Caco-2 (cell line): ENCODE measurements at regions of chr10 and their contacts with region 1.

Region 1: GRCh38 chr10:77111611-77112550 is 525.7 kb downstream of the KCNMA1 start:
- DNase-seq: peak in 1 of 2 experiments; percentile 66
- H3K4me3 ChIP-seq: no peak overlapping the region
- H3K4me3 Mint-ChIP-seq: no peak overlapping the region
- H3K27ac Mint-ChIP-seq: no peak overlapping the region
- H3K4me1 ChIP-seq: peaks cover 6% of the 10 kb centered on the region
- H3K4me1 Mint-ChIP-seq: no peaks in the 10 kb centered on the region
- H3K27me3 ChIP-seq: no peaks in the 10 kb centered on the region
- H3K27me3 Mint-ChIP-seq: no peaks in the 10 kb centered on the region
- CTCF ChIP-seq: peak; percentile 72 to 89

Region 2: DNA sequence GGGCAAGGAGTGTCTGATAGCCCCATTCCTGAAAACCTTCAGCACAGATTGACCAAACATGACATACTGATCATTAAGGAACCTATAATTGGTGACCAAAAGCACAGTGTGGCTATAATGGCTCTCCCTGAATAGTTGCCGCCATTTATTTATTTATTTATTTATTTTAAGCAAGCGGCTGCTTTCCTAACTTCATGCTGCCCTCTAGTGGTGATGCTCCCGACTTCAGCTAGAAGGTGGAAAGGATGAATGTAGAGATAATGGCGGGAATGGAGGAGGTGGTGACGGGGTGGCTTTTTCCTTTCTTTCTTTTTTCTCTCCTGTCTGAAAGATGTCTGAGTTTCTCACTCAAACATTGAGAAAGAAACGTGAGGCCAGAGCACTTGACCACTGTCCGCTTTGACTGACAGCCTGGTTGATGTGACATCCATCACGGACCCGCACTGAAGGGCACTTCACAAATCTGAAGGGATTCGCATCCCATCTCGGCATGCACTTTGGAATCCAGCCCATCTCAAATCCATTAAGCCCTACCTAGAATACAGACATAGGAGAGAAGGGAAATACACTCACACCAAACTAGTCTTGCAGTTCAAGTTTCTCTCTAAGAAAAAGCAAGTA is 564.4 kb before region 1 on chr10:
- CTCF ChIA-PET with region 1: interaction called, 5 read pairs
- POLR2A ChIA-PET with region 1: no interaction called
- intact Hi-C with region 1: loop called (anchors 5 kb)
- DNase-seq: peak; percentile 78 to 87
- H3K4me3 ChIP-seq: no peak overlapping the region
- H3K4me3 Mint-ChIP-seq: no peak overlapping the region
- H3K27ac Mint-ChIP-seq: no peak overlapping the region
- H3K4me1 ChIP-seq: peaks cover 7% of the 10 kb centered on the region
- H3K4me1 Mint-ChIP-seq: peaks cover 7% of the 10 kb centered on the region
- H3K27me3 ChIP-seq: no peaks in the 10 kb centered on the region
- H3K27me3 Mint-ChIP-seq: no peaks in the 10 kb centered on the region
- CTCF ChIP-seq: peak; percentile 81 to 85

Region 3: DNA sequence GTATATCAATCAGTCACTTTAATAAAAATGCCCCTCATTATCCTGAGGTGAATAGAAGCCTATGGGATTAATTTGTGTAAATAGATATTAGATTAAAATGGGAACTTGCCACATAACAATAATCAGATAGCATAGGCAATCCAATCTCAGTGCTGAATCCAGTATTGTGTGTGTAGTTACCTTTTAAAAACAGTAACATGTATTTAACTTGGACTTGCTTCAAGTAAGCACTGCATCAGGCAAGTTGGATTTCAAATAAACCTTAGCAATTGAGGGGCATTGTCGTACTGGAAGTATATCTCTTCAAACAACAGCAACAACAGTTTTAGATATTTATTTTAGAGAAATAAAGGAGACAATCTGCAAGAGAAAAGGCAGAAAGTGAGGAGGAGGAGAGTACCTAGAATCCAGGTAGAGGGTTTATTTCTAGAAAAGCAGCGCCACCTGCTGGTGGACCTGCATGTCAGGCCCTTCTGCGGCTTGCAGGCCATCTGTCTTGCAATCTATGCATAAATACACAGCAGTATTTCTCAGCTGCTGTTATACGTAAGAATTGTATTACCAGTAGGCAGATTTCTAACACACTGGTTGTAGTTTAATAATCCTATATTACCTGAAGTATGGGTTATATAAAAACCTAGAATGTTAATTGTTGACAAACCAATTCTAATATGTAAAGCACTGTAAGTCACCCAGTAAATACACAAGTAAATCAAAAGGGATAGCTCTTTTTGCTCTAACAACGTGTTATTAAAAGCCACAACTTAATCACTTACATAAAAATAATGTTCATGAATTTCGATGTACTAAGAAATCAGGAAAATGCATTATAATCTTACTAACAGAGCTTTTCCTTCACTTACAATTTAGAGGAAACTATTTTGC is 127.1 kb before region 1 on chr10:
- CTCF ChIA-PET with region 1: no interaction called
- POLR2A ChIA-PET with region 1: no interaction called
- intact Hi-C with region 1: loop called (anchors 5 kb)
- DNase-seq: peak; percentile 77 to 83
- H3K4me3 ChIP-seq: no peak overlapping the region
- H3K4me3 Mint-ChIP-seq: no peak overlapping the region
- H3K27ac Mint-ChIP-seq: no peak overlapping the region
- H3K4me1 ChIP-seq: no peaks in the 10 kb centered on the region
- H3K4me1 Mint-ChIP-seq: no peaks in the 10 kb centered on the region
- H3K27me3 ChIP-seq: no peaks in the 10 kb centered on the region; the same call in 1 of the 2 replicates
- H3K27me3 Mint-ChIP-seq: peaks cover 4% of the 10 kb centered on the region
- CTCF ChIP-seq: peak; percentile 94

Region 4: DNA sequence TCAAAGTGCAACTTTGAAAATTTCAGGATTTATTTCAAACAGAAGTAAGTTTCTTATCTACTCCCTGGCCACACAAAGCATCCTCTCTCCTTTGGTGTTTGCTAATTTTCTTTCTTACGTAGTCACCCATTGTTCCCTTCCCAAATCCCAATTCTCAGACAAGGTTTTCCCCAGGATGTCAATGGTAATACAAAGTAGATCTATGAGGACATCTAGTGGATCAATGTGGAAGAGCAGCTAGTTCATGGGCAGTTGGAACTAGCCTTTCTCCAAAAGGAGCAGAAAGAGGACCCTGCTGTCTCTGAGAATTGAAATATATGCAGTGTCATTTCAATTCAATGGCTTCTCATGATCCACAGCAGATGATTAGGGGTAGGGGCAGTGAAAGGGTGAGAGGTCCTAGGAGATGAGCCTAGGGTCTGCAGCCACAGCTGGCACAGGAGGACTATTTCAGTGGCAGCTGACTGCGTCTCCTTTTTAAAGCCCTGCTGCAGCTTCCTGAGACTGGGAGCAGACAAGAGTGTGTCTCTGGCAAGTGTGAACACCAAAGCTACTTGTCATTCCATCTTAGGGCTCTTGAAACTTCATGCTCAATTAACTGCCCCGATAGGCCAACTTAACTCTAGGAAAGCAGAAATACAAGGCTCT is 106.8 kb before region 1 on chr10:
- CTCF ChIA-PET with region 1: no interaction called
- POLR2A ChIA-PET with region 1: no interaction called
- intact Hi-C with region 1: loop called (anchors 1 kb)
- DNase-seq: peak in 1 of 2 experiments; percentile 56
- H3K4me3 ChIP-seq: no peak overlapping the region
- H3K4me3 Mint-ChIP-seq: no peak overlapping the region
- H3K27ac Mint-ChIP-seq: no peak overlapping the region
- H3K4me1 ChIP-seq: no peaks in the 10 kb centered on the region
- H3K4me1 Mint-ChIP-seq: no peaks in the 10 kb centered on the region
- H3K27me3 ChIP-seq: no peaks in the 10 kb centered on the region
- H3K27me3 Mint-ChIP-seq: peaks cover 4% of the 10 kb centered on the region
- CTCF ChIP-seq: peak; percentile 61 to 77

Region 5: GRCh38 chr10:77036993-77037734 is 74.7 kb before region 1 on chr10:
- CTCF ChIA-PET with region 1: interaction called, 4 read pairs
- POLR2A ChIA-PET with region 1: no interaction called
- intact Hi-C with region 1: loop called (anchors 5 kb)
- DNase-seq: peak in 1 of 2 experiments; percentile 20
- H3K4me3 ChIP-seq: no peak overlapping the region
- H3K4me3 Mint-ChIP-seq: no peak overlapping the region
- H3K27ac Mint-ChIP-seq: no peak overlapping the region
- H3K4me1 ChIP-seq: no peaks in the 10 kb centered on the region
- H3K4me1 Mint-ChIP-seq: no peaks in the 10 kb centered on the region
- H3K27me3 ChIP-seq: no peaks in the 10 kb centered on the region
- H3K27me3 Mint-ChIP-seq: peaks cover 7% of the 10 kb centered on the region
- CTCF ChIP-seq: peak; percentile 36 to 49

Region 6: DNA sequence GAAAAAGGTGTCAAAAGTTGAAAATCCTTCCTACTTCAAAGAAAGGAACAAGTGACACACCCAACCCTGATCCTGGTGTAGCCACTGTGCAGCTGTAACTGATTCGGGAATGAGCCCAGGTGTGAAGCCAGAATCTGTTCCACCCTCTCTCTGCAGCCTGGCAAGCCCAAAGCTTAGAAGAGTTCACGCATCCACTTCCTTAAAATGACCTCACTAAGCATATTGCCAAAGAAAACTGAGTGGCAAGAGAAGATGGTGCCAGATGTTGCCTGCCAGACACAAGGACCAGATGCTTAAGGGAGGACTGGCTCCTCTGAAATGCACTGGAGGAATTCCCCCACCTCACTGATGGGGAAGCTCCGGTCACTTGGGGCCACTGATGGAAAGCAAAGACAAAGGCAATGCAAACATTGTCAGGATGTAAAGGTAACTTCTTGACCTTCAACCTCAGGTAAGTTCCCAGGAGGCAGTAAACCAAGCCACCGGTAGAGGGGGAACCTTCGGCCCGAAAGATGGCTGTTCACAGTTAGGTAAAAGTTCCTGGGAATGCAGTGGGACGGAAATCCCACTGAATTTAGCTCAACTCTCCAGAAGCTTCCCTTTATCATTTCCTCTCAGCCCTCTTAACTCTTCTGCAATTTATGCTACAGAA is 29.2 kb before region 1 on chr10:
- CTCF ChIA-PET with region 1: no interaction called
- POLR2A ChIA-PET with region 1: no interaction called
- intact Hi-C with region 1: loop called (anchors 1 kb)
- DNase-seq: peak; percentile 63 to 70
- H3K4me3 ChIP-seq: no peak overlapping the region
- H3K4me3 Mint-ChIP-seq: no peak overlapping the region
- H3K27ac Mint-ChIP-seq: no peak overlapping the region
- H3K4me1 ChIP-seq: peaks cover 5% of the 10 kb centered on the region; the same call in 1 of the 2 replicates
- H3K4me1 Mint-ChIP-seq: no peaks in the 10 kb centered on the region
- H3K27me3 ChIP-seq: no peaks in the 10 kb centered on the region
- H3K27me3 Mint-ChIP-seq: no peaks in the 10 kb centered on the region
- CTCF ChIP-seq: peak; percentile 58 to 77

Region 7: DNA sequence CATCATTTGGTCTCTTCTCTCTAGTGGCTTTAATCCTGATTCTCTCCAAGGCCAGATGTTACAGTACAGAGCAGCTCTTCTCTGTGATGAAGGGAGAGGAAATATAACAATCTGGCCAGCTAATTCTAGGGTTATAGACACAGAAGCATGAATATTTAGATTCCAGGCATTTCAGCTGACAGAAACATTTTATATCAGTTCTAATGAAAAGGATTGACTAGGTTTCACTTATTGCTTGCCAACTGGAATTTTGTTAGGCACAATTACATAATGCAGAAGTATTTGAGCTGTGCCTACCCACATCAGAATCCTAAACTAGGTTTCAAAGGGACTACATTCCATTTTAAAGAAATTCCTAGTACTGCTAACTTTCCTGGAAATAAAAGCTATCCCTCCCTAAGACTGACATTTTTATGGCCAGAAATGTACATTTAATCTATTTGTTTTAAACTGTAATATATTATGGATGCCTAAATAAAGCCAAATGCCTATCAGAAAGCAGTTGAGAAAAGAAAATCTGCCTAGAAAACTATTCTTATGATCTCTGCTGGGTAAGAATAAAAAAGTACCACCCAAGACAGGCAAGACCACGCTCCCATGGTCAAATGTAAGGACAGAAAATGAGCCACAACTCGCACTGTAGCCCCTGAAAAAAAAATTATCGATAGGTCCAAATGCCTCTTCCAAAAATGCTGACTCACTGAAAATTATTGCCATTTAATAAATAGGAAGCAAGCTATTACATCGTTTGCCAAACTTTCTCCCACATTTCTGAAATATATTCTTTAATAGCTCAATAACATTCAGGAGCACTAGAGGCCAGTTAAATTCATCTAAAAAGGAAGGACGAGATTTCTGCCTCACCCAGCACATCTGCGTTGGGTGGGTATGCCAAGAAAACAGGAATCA is 27.6 kb after region 1 on chr10:
- CTCF ChIA-PET with region 1: no interaction called
- POLR2A ChIA-PET with region 1: no interaction called
- intact Hi-C with region 1: no loop called
- DNase-seq: no peak
- H3K4me3 ChIP-seq: no peak overlapping the region
- H3K4me3 Mint-ChIP-seq: no peak overlapping the region
- H3K27ac Mint-ChIP-seq: no peak overlapping the region
- H3K4me1 ChIP-seq: no peaks in the 10 kb centered on the region
- H3K4me1 Mint-ChIP-seq: peaks cover 6% of the 10 kb centered on the region
- H3K27me3 ChIP-seq: no peaks in the 10 kb centered on the region
- H3K27me3 Mint-ChIP-seq: peaks cover 6% of the 10 kb centered on the region
- CTCF ChIP-seq: no peak